ENCODE measurements at regions of chr7 and their contacts with region 1.

Region 1: GRCh38 chr7:36152756-36153570 is at the start of gene EEPD1:
- DNase-seq: peak; percentile 99 to 100 (median 100)

Region 2: DNA sequence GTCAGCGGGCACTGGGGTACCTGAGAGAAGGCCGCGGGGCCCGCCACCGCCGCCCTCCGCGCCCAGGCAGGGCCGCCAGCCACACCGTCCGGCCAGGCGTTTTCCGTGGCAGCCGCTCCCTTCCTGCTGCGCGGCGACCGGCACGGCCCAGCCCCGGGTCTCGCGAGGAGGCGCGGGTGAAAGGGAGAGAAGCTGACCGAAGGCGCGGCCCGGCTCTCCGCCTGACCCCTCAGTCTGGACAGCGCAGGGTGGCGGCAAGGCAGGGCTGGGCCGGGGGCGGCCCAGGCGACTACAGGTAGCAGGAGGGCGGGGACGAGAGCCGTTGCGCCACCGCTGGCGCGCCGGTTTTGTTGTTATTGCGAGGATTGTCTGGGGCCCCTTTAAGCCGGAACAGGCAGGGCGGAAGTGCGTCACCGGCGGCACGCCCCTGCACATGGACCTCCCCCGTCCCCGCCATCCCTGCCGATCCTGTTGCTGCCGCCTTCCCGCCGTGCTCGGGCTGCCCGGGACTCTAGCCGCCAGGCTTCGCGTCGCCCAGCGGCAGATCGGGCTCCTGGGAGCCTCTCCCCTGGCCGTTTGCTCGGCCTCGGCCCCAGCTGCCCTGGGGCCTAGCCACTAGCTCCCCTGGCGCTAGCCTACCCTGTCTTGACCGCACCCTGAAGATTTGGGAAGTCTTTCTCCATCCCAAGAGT is 458.0 kb before region 1 on chr7 and contains the start of gene HERPUD2:
- intact Hi-C with region 1: loop called (anchors 10 kb)
- DNase-seq: peak; percentile 89 to 98 (median 95)

Region 3: DNA sequence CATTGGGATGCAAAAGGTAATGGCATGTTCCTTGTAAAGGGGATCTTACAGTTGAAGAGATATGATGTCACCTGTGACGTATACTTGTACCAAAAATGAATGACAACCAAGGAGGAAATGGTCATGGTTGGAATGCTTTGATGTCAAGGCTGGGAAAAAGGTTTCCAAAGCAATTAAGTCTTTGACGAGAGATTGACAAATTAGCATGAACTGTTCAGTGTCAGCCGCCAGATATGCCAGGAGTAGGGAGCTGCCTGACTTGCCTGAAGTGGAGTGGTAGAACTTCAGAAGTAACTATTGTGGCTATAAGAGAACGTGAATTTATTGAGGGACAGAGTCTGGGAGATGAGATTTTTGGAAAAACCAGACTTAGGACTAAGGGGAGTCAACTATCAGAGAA is 264.0 kb before region 1 on chr7:
- intact Hi-C with region 1: no loop called
- DNase-seq: no peak

Region 4: DNA sequence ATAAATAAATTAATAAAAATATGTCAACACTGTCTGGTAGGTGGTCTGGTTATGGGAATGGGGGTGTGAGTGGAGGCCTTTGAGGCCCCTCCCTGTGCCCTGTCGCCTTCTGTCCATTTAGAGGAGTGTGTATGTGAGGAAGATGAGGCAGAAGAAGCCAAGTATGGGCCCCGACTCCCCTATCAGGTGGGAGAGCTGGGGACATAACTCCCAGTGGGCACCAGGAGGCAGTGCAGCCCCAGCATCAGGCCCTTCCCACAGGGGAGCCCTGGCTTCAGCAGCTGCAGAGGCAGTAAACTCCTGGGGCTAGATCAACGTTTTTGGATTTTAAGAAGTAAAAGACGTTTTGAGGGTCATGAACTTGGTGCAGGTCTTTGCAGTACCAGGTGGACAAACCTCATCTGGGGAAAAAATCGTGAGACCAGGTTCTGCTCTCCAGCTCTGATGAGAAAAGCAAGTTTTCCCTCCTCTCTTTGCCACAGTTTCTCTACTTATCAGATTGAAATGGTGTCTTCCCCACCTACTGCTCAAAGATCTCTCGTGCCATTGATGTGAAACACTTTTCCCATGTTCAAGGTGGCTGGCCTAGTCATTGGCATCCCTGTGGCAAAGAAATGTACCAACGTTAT is 167.7 kb before region 1 on chr7:
- intact Hi-C with region 1: loop called (anchors 10 kb)
- DNase-seq: peak; percentile 74 to 94 (median 86)

Region 5: DNA sequence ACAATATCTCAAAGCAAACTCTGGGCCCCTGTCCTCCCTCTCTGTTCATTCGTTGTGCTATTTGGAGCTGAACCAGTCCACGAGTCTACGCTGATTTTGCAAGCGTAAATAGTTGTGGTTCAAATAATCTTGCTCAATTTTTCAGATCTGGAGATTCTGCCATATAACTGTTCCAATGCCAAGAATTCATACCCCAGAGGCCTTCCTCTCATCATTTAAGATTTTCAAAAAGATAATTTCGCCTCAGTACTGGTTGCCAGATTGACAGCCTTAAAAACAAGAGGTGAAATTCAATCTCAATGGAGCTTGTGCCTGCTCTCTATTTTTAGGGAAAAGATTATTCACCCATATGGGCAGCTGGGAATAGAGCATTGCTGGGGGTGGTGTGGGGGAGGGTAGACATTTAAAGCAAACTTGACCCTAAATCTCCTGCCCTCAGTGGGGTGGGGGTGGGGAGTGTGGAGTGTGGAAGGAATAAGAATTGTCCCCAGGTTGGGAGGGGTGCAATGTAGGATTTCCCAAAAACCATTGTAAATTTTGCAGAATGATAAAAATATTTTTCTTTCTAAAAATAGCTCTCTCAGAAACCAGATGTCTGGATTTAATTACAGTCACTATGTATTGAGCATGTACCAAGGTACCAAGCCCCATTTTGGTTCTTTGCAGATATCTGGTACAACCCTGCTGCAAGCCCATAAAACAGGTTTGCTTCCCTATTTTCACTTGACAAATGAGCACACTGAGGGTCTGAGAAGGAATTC is 104.6 kb before region 1 on chr7:
- intact Hi-C with region 1: loop called (anchors 10 kb)
- DNase-seq: no peak

Region 6: GRCh38 chr7:36280840-36281812 is 128.2 kb after region 1 on chr7:
- intact Hi-C with region 1: loop called (anchors 5 kb)
- DNase-seq: peak; percentile 70 to 96 (median 84)

Measured in head of caudate nucleus (tissue), 42 donors.